Heart left ventricle (tissue), 16 donors: ENCODE measurements at regions of chr1 and their contacts with region 1.

Region 1: DNA sequence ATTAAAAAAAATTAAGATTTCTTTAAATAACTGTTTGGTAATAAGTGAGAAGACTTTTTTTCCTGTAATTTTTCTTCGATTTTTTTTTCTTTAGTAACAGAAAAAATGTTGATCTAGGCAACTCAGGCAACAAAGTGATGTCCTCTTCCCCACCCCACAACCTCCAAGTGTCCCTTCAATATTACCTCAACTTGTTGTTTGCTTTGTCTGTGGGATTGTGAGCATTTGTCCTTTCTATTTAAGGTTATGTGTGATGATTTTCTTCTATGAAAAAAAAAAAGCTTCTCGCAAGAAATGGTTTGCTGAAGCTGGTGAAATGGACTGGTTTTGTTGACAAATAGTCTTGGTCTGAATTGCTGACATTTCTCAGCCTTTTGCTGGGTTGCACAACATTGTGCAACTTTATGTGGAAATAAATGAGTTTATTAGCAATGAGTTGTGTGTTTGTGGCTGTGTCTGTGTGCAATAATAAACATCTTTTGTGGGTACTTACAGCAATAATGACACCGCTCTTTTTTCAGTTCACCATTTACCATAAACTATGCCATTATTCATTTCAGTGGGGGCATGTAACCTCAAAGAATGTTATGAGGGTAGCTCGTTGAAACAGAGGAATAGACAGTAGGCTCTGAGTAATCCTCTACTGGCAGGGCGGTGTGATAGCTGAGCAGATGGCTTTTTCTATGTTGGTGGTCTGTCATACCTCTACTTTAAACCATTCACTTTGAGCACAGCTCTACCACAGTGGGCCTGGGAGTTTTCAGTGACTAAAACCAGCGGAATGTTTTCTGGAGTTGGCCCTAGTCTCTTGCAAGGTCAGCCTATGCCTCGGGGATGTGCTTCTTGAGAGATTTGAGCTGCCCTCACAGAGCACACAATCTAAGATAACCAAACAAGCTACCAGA is 218.5 kb downstream of the HLX start:
- DNase-seq: no peak
- ATAC-seq: peak in 2 of 4 donors; percentile 19 to 49
- H3K4me3 ChIP-seq: no peak overlapping the region
- H3K27ac ChIP-seq: peak overlapping the region in 3 of 12 donors; percentile 21 to 85 (median 59)
- H3K4me1 ChIP-seq: peaks cover 0 to 65% (median 0%) of the 10 kb centered on the region in 12 donors
- H3K27me3 ChIP-seq: no peaks in the 10 kb centered on the region
- CTCF ChIP-seq: no peak
- POLR2A ChIP-seq: no peak

Region 2: GRCh38 chr1:221035680-221036153 is 62.0 kb before region 1 on chr1:
- intact Hi-C with region 1: loop called in 1 of 10 experiments (anchors 10 kb)
- DNase-seq: peak in 1 of 5 donors; percentile 16
- ATAC-seq: peak in 3 of 4 donors; percentile 54 to 88 (median 69)
- H3K4me3 ChIP-seq: no peak overlapping the region
- H3K27ac ChIP-seq: peak overlapping the region in 2 of 12 donors; percentile 19 to 48
- H3K4me1 ChIP-seq: peaks cover 0 to 37% (median 8%) of the 10 kb centered on the region in 12 donors
- H3K27me3 ChIP-seq: no peaks in the 10 kb centered on the region
- CTCF ChIP-seq: no peak
- POLR2A ChIP-seq: no peak